Activated T-helper 1 cell treated with anti-CD3 and anti-CD28 coated beads, Interleukin-12 subunit alpha, Interleukin-12 subunit beta, Interleukin-2, Interleukin-4 antibody, amounts not matched to agents 30 ng/mL and 10 ng/mL and 1 ng/mL, durations not matched to agents 14 hours and 24 hours and 36 hours (primary cell): ENCODE measurements at regions of chr4 and their contacts with region 1.

Region 1: GRCh38 chr4:153497988-153498967 is 32.1 kb downstream of the TMEM131L start:
- DNase-seq: no peak
- H3K4me3 Mint-ChIP-seq: peak overlapping the region; percentile 79
- H3K27ac Mint-ChIP-seq: peak overlapping the region; percentile 90
- H3K4me1 Mint-ChIP-seq: peaks cover 89% of the 10 kb centered on the region
- H3K27me3 Mint-ChIP-seq: no peaks in the 10 kb centered on the region

Region 2: DNA sequence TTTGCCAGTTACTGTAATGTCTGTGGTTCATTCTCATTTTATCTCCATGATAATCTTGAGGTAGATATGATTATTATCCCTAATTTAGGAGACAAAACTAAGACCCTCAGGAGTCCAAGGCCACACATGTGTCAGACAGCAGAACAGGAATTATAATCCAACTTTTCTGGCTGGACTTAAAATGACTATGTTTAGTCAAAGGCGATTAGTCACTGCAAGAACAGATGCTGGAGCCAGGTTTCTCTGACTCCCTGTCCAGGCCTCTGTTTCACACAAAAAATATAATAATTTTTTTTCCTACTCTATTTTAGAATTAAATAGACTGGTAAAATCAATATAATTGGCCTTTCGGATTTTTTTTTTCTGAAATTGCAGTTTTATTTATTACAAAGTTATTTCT is 88.9 kb before region 1 on chr4:
- intact Hi-C with region 1: no loop called
- DNase-seq: no peak
- H3K4me3 Mint-ChIP-seq: no peak overlapping the region
- H3K27ac Mint-ChIP-seq: no peak overlapping the region
- H3K4me1 Mint-ChIP-seq: peaks cover 5% of the 10 kb centered on the region
- H3K27me3 Mint-ChIP-seq: no peaks in the 10 kb centered on the region

Region 3: DNA sequence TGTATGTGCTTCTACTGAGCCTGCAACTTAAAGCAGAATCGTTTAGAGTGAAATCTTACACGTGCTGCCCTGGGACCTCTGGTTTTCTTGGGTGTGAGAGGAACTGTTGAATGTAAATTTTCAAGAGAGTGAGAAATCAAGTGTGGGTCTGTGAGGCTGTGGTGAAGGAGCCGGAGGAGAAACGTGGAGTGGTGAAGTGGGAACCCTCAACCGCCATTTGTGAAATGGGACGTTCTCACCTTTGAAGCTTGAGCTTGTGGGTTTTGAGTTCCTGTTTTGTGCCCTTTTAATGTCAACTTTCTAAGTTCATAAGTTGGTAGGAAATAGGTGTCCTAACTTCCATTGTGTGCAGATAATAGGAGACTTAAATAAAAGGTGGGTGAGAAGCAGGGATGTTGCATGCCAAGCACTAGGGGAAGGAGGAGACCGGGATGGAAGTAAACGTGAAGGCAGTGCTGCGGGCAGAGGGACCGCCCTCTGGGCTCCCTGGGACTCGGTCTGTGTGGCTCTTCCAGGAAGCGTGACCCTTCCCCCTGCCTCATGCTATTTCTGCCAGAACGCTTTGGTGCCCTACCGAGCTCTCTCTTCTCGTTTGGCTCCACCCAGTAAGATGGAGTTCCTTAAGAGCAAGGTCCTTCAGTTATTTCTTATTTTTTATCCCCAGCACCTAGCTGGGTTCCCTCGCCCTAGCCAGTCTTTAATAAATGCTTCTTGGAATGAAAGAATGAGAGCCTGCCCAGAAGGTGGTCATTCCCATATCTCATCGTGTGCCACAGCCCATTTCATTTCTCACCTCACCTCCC is 23.9 kb after region 1 on chr4:
- intact Hi-C with region 1: loop called (anchors 1 kb)
- DNase-seq: peak; percentile 54
- H3K4me3 Mint-ChIP-seq: peak overlapping the region; percentile 60
- H3K27ac Mint-ChIP-seq: peak overlapping the region; percentile 91
- H3K4me1 Mint-ChIP-seq: peaks cover 89% of the 10 kb centered on the region
- H3K27me3 Mint-ChIP-seq: no peaks in the 10 kb centered on the region

Region 4: GRCh38 chr4:153541456-153542096 is 43.3 kb after region 1 on chr4:
- intact Hi-C with region 1: loop called (anchors 1 kb)
- DNase-seq: peak; percentile 32
- H3K4me3 Mint-ChIP-seq: no peak overlapping the region
- H3K27ac Mint-ChIP-seq: no peak overlapping the region
- H3K4me1 Mint-ChIP-seq: peaks cover 38% of the 10 kb centered on the region
- H3K27me3 Mint-ChIP-seq: no peaks in the 10 kb centered on the region